Left cardiac atrium (tissue), 4 donors: ENCODE measurements at regions of chr9 and their contacts with region 1.

Region 1: GRCh38 chr9:37485389-37486219 is at the start of gene POLR1E:
- DNase-seq: peak; percentile 97
- ATAC-seq: peak; percentile 98
- total RNA-seq, gene POLR1E: 12.5 to 17.2 TPM

Region 2: GRCh38 chr9:37415011-37415719 is 70.4 kb before region 1 on chr9:
- intact Hi-C with region 1: loop called in 1 of 2 experiments (anchors 10 kb)
- DNase-seq: peak; percentile 67
- ATAC-seq: peak; percentile 67 to 69

Region 3: DNA sequence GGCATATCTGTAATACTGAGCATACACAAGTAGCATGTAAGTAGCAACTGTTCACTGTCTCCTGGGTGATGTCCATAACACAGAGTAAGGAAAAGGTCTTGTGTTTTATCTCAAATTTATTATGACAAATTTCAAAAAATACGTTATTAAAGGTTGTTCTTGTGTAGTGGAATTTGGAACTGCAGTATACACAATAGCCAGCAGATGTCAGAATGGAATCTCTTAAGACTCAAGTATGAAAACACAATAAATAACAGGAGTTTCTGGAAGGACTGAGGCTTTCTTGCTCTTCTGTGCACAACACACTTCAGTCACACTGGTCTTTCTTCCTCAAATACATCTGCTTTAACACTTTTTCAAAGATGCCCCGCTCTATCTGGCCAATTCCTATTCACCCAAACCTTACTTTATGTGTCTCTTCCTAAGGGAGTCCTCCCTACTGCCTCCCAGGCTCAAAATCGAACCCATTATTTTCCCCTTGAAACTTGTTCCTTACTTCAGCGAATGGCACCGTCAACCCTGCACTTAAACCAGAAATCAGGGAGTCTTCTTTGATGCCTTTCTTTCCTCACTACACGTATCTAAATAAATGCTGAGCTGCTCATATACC is 97.0 kb after region 1 on chr9:
- intact Hi-C with region 1: loop called in 1 of 2 experiments (anchors 10 kb)
- DNase-seq: no peak
- ATAC-seq: peak; percentile 50 to 55